ENCODE measurements at regions of chr20 and their contacts with region 1.

Region 1: GRCh38 chr20:46089417-46090388 is at the start of gene NCOA5:
- DNase-seq: peak; percentile 91 to 95
- ATAC-seq: peak; percentile 89 to 98 (median 91)
- H3K4me3 ChIP-seq: peak within 1 kb of the TSS; percentile 66
- H3K4me3 Mint-ChIP-seq: peak within 1 kb of the TSS; percentile 90
- H3K27ac ChIP-seq: peak within 1 kb of the TSS; percentile 71
- H3K27ac Mint-ChIP-seq: peak within 1 kb of the TSS; percentile 93 to 94
- H3K4me1 ChIP-seq: peaks cover 8% of the 10 kb centered on the region
- H3K4me1 Mint-ChIP-seq: peaks cover 48 to 49% of the 10 kb centered on the region in 2 donors
- H3K27me3 ChIP-seq: no peaks in the 10 kb centered on the region
- H3K27me3 Mint-ChIP-seq: no peaks in the 10 kb centered on the region
- CTCF ChIP-seq: no peak
- total RNA-seq, gene NCOA5: 8.8 to 18.4 (median 18.0) TPM

Region 2: DNA sequence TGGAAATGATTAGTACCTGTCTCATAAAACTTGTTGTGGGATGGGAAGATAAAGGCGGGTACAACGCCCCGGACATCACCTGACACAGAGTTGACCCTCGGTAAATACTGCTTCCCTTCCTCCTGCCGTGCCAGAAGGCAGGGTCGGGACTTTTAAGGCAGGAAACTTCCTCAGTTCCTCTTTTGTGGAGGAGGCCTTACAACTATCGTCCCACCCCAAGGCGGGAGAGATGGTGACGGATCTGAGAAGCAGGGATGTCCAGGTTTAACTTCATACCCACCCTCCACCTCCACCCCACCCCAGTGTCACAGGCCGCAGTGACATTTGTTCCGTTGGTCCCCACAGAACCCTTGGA is 297.4 kb before region 1 on chr20:
- intact Hi-C with region 1: loop called (anchors 1 kb)
- DNase-seq: no peak
- ATAC-seq: peak in 1 of 3 donors; percentile 33
- H3K4me3 ChIP-seq: peak overlapping the region; percentile 81
- H3K4me3 Mint-ChIP-seq: peak overlapping the region; percentile 93
- H3K27ac ChIP-seq: peak overlapping the region; percentile 83
- H3K27ac Mint-ChIP-seq: peak overlapping the region; percentile 91 to 93
- H3K4me1 ChIP-seq: peaks cover 17% of the 10 kb centered on the region
- H3K4me1 Mint-ChIP-seq: peaks cover 13 to 15% of the 10 kb centered on the region in 2 donors
- H3K27me3 ChIP-seq: no peaks in the 10 kb centered on the region
- H3K27me3 Mint-ChIP-seq: no peaks in the 10 kb centered on the region
- CTCF ChIP-seq: no peak

Region 3: DNA sequence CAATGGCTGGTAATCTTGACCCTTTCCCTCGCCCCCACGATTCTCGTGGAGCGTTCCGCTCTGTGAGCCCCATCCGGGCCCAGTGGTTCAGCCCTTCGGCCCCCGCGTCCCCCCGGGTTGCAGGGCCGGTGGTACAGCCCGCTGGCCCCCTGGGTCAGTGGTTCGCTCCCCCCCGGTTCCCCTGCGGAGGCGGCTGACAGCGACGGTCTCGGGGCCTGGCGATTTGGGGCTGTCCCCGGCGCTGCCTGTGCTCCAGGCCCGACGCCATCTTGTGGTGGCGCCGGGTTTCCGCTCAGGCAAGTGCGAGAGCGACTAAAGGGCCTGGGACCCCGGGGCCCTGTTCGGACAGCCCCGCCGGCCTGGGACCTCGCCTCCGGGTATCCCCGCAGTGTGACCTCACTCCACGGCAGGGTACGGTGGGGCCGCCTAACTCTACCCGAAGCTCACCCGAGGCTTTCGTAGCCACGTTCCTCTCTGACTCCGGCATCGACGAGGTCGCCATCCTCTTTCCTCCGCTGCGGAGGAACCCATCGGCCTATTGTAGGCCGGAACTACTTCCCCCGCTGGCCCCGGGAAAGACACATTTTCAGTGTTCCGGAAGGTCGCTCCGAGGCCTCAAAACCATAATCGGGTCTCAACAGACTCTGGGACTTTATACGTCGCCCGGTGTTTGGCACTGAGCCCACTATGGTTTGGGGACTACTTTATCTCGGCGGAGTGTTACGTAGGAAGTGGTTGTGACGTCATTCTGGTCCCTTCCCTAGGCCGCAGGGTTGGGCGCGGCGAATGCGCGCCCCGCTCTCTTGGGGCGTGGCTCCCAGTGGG is 117.8 kb before region 1 on chr20 and contains the start of gene ZNF335:
- intact Hi-C with region 1: no loop called
- DNase-seq: peak; percentile 97 to 98
- ATAC-seq: peak; percentile 81 to 92 (median 81)
- H3K4me3 ChIP-seq: peak within 1 kb of the TSS; percentile 95
- H3K4me3 Mint-ChIP-seq: peak within 1 kb of the TSS; percentile 97
- H3K27ac ChIP-seq: peak within 1 kb of the TSS; percentile 96
- H3K27ac Mint-ChIP-seq: peak within 1 kb of the TSS; percentile 97 to 99
- H3K4me1 ChIP-seq: peaks cover 36% of the 10 kb centered on the region
- H3K4me1 Mint-ChIP-seq: peaks cover 28 to 29% of the 10 kb centered on the region in 2 donors
- H3K27me3 ChIP-seq: no peaks in the 10 kb centered on the region
- H3K27me3 Mint-ChIP-seq: no peaks in the 10 kb centered on the region
- CTCF ChIP-seq: no peak
- total RNA-seq, gene ZNF335: 101 to 119 (median 102) TPM

Region 4: GRCh38 chr20:46022411-46023147 is 67.1 kb before region 1 on chr20:
- intact Hi-C with region 1: loop called (anchors 5 kb)
- DNase-seq: peak; percentile 68 to 84
- ATAC-seq: peak; percentile 52 to 63 (median 55)
- H3K4me3 ChIP-seq: no peak overlapping the region
- H3K4me3 Mint-ChIP-seq: peak overlapping the region; percentile 81
- H3K27ac ChIP-seq: no peak overlapping the region
- H3K27ac Mint-ChIP-seq: no peak overlapping the region
- H3K4me1 ChIP-seq: peaks cover 22% of the 10 kb centered on the region
- H3K4me1 Mint-ChIP-seq: peaks cover 25 to 26% of the 10 kb centered on the region in 2 donors
- H3K27me3 ChIP-seq: peaks cover 23% of the 10 kb centered on the region
- H3K27me3 Mint-ChIP-seq: peaks cover 42 to 69% of the 10 kb centered on the region in 2 donors
- CTCF ChIP-seq: peak; percentile 73

Region 5: GRCh38 chr20:46400828-46401477 is 311.2 kb after region 1 on chr20:
- intact Hi-C with region 1: loop called (anchors 5 kb)
- DNase-seq: peak; percentile 26 to 85
- ATAC-seq: peak; percentile 66 to 84 (median 71)
- H3K4me3 ChIP-seq: no peak overlapping the region
- H3K4me3 Mint-ChIP-seq: peak overlapping the region; percentile 87
- H3K27ac ChIP-seq: peak overlapping the region; percentile 75
- H3K27ac Mint-ChIP-seq: peak overlapping the region; percentile 95 to 98
- H3K4me1 ChIP-seq: peaks cover 73% of the 10 kb centered on the region
- H3K4me1 Mint-ChIP-seq: peaks cover 75 to 94% of the 10 kb centered on the region in 2 donors
- H3K27me3 ChIP-seq: no peaks in the 10 kb centered on the region
- H3K27me3 Mint-ChIP-seq: no peaks in the 10 kb centered on the region
- CTCF ChIP-seq: no peak

Measured in natural killer cell (primary cell).